ENCODE measurements at regions of chr14 and their contacts with region 1.

Region 1: DNA sequence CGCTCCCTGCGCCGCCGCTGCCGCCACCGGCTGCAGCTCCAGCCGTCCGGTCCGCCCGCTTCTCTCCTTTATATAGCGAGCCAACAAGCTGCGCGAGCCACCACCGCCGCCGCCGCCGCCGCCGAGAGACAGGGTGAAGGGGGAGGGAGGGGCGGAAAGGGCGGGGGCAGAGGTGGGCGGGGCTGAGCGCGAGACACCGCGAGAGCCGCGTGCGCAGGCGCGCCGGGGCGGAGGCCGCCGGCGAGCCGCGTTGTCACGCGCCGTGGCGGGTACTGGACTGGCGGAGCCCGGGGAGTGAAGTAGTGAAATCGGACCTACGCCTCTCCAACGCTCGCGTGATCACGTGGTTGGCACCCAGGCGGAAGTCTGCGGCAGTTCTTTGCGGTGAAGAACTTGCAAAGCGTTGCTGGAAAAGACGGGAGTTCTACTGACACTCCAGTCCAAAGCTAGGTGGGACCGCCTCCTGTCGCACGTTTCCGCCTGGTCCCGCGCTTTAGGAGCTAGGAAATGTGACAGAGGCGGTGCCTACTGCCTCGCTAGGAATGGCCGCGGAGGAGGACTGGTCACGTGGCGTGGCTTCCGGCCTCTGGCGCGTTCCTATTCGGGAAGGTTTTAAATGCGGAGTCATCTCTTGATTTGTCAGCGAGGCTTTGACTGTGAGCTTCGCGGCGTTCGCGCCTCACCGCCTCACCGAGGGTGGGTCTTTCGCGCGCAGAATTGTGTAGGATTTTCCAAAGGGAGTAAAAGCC is at the start of gene GTF2A1:
- DNase-seq: peak; percentile 94 to 98
- ATAC-seq: peak; percentile 70 to 92 (median 78)
- H3K4me3 ChIP-seq: peak within 1 kb of the TSS; percentile 98
- H3K4me3 Mint-ChIP-seq: peak within 1 kb of the TSS; percentile 100
- H3K27ac ChIP-seq: peak within 1 kb of the TSS; percentile 100
- H3K27ac Mint-ChIP-seq: peak within 1 kb of the TSS; percentile 99 to 100
- H3K4me1 ChIP-seq: peaks cover 14% of the 10 kb centered on the region
- H3K4me1 Mint-ChIP-seq: peaks cover 32 to 42% of the 10 kb centered on the region in 2 donors
- H3K27me3 ChIP-seq: no peaks in the 10 kb centered on the region
- H3K27me3 Mint-ChIP-seq: peaks cover 0 to 3% of the 10 kb centered on the region in 2 donors
- CTCF ChIP-seq: no peak
- total RNA-seq, gene GTF2A1: 24.5 to 32.7 (median 28.6) TPM

Region 2: GRCh38 chr14:80930836-80931389 is 290.1 kb before region 1 on chr14:
- intact Hi-C with region 1: loop called (anchors 1 kb)
- DNase-seq: peak in 1 of 2 donors; percentile 81
- ATAC-seq: peak; percentile 87 to 90 (median 88)
- H3K4me3 ChIP-seq: no peak overlapping the region
- H3K4me3 Mint-ChIP-seq: peak overlapping the region; percentile 59
- H3K27ac ChIP-seq: peak overlapping the region; percentile 59
- H3K27ac Mint-ChIP-seq: peak overlapping the region; percentile 72 to 89
- H3K4me1 ChIP-seq: peaks cover 22% of the 10 kb centered on the region
- H3K4me1 Mint-ChIP-seq: peaks cover 22 to 36% of the 10 kb centered on the region in 2 donors
- H3K27me3 ChIP-seq: no peaks in the 10 kb centered on the region
- H3K27me3 Mint-ChIP-seq: no peaks in the 10 kb centered on the region
- CTCF ChIP-seq: no peak

Region 3: GRCh38 chr14:81170104-81170828 is 50.7 kb before region 1 on chr14:
- intact Hi-C with region 1: loop called (anchors 1 kb)
- DNase-seq: peak; percentile 85 to 92
- ATAC-seq: peak; percentile 97 to 99 (median 97)
- H3K4me3 ChIP-seq: peak overlapping the region; percentile 54
- H3K4me3 Mint-ChIP-seq: peak overlapping the region; percentile 91
- H3K27ac ChIP-seq: peak overlapping the region; percentile 76
- H3K27ac Mint-ChIP-seq: peak overlapping the region; percentile 91 to 96
- H3K4me1 ChIP-seq: peaks cover 8% of the 10 kb centered on the region
- H3K4me1 Mint-ChIP-seq: peaks cover 18 to 24% of the 10 kb centered on the region in 2 donors
- H3K27me3 ChIP-seq: no peaks in the 10 kb centered on the region
- H3K27me3 Mint-ChIP-seq: no peaks in the 10 kb centered on the region
- CTCF ChIP-seq: peak; percentile 83

Region 4: DNA sequence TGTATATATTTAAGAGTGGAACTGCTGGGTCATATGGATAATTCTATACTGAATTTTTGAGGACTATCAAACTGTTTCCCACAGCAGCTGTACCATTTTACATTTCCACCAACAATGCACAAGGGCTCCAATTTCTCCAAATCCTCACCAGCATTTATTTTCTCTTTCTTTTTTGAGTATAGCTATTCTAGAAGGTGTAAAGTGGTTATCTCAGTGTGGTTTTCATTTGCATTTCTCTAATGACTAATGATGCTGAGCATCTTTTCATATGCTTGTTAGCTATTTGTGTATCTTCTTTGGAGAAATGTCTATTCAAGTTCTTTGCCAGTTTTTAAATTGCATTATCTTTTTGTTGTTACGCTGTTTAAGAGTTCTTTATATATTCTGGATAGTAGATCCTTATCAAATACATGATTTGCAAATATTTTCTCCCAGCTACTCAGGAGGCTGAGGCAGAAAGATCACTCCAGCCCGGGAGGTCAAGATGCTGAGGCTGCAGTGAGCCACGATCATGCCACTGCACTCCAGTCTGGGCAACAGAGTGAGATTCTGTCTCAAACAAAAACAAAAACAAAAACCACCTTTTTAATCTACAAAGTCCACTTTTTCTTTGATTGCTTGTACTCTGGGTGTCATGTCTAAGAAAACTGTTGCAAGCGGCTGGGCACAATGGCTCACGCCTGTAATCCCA is 33.0 kb before region 1 on chr14:
- intact Hi-C with region 1: no loop called
- DNase-seq: no peak
- ATAC-seq: no peak
- H3K4me3 ChIP-seq: no peak overlapping the region
- H3K4me3 Mint-ChIP-seq: no peak overlapping the region
- H3K27ac ChIP-seq: no peak overlapping the region
- H3K27ac Mint-ChIP-seq: peak overlapping the region; percentile 41 to 53
- H3K4me1 ChIP-seq: peaks cover 2% of the 10 kb centered on the region
- H3K4me1 Mint-ChIP-seq: peaks cover 27 to 39% of the 10 kb centered on the region in 2 donors
- H3K27me3 ChIP-seq: no peaks in the 10 kb centered on the region
- H3K27me3 Mint-ChIP-seq: no peaks in the 10 kb centered on the region
- CTCF ChIP-seq: no peak

Measured in natural killer cell (primary cell).